Lower leg skin (tissue), 4 donors: ENCODE measurements at regions of chr5 and their contacts with region 1.

Region 1: DNA sequence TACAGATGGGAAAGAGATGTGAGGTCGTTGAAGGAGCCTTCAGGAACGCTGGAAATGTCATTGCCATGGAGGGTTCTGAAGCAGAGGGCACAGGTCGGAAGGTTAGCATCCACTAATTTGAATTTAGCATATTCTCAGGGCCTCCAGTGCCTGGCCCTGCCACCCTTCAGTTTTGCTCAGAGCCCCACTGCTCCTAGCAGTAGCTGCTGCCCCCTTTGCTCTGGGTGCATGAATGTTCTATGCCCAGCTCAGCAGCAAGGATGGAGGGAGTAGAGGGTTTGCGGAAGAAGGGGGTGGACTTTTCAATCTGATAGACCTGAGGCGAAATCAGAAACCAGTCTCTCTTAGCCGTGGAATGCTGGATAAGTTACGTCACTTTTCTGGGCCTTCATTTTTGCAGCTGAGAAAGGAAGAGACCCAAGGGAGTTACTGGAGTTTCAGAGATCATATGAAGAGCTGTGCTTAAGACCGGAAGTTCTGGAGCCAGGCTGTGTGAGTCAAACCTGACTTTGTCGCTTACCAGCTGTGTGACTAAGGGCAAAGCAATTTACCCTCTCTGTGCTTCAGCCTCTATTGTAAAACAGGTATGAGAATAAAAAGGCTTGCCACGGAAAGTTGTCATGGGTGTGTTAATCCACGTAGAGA is 133.2 kb upstream of the PANK3 start:
- DNase-seq: peak in 1 of 2 donors; percentile 74
- H3K4me3 ChIP-seq: no peak overlapping the region
- CTCF ChIP-seq: no peak
- POLR2A ChIP-seq: no peak

Region 2: GRCh38 chr5:167030500-167031120 is 1681.8 kb before region 1 on chr5:
- intact Hi-C with region 1: loop called (anchors 10 kb)
- DNase-seq: no peak
- H3K4me3 ChIP-seq: no peak overlapping the region
- CTCF ChIP-seq: no peak
- POLR2A ChIP-seq: no peak